ENCODE measurements at regions of chr4 and their contacts with region 1.

Region 1: DNA sequence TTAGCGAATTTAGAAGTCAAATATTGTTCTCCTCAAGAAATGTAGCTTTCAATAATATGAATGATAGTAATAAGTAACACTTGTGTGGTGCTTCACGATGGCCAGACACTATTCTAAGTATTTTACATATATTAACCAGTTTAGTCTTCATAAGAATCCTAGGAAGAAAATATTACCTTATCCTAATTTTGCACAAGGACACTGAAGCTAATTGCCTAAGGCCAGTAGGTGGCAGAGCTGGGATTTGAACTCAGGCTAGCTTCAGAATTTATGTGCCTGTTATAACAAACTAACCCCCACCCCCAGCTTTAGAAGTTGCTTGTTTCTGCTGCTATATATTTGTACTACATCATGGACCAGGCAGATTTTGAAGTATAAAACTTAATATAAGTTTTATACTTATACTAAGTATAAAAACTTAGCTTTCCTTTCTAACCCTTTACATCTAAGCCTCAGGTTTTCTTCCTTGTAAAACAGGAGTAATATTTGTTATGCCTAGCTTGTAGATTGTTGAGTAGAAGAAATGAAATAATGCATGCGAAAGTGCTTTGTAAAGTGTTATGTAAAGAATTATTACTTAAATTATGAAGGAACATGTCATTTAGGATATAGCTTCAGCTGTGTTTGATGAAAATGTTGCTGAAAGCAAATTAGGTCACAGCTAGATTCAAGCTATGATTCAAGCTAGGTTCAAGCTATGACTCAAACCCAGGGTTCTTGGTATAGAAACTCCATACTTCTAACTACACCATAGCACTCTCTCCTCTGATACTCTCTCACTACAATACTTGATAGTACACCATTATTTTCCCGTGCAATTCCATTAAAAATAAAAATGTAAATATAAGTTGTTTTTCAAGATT is 4.2 kb upstream of the CDS1 start:
- DNase-seq: peak; percentile 36 to 56 (median 53)
- H3K4me3 ChIP-seq: no peak overlapping the region
- H3K27ac ChIP-seq: no peak overlapping the region
- H3K4me1 ChIP-seq: peaks cover 0 to 20% (median 15%) of the 10 kb centered on the region in 4 experiments
- H3K27me3 ChIP-seq: peaks cover 19 to 41% (median 25%) of the 10 kb centered on the region in 5 experiments

Region 2: DNA sequence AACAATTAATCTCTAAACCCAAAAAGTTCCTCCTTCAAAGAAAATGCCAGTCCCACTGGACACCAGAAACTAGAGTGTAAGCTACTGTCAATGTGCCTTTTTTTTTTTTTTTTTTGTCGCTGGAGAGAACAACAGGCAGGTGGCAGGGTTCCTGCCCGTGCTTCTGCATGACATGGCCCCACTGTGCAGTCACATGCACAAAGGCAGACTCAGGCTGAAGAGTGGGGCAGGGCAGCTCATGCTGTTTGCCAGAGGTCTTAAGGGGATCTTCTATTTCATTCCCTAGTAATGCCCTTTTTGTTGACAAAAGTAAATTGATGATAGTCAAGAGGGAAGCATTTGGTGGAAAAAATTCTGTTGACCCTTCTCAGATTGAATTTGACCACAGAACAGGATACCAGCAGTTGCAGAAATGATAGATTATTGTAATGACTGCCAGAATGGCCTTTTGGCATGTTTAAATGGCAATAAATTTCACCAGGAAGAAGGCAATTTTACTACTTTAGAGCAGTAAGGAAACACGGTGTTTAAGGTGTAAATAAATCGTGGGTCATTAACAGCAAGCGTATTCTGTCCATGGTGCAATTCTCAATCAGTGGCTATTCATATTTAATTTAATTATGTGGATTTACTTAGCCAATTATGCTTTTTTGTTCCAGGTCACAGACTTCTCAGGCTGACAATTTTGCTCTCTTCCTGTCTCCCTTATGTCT is 160.6 kb before region 1 on chr4:
- CTCF ChIA-PET with region 1: no interaction called
- POLR2A ChIA-PET with region 1: no interaction called
- DNase-seq: no peak
- H3K4me3 ChIP-seq: no peak overlapping the region
- H3K27ac ChIP-seq: no peak overlapping the region
- H3K4me1 ChIP-seq: no peaks in the 10 kb centered on the region
- H3K27me3 ChIP-seq: peaks cover 0 to 2% (median 0%) of the 10 kb centered on the region in 5 experiments

Region 3: GRCh38 chr4:84568496-84568895 is 10.3 kb before region 1 on chr4:
- CTCF ChIA-PET with region 1: interaction called, 11 read pairs
- POLR2A ChIA-PET with region 1: no interaction called
- DNase-seq: no peak
- H3K4me3 ChIP-seq: no peak overlapping the region
- H3K27ac ChIP-seq: no peak overlapping the region
- H3K4me1 ChIP-seq: no peaks in the 10 kb centered on the region
- H3K27me3 ChIP-seq: peaks cover 0 to 2% (median 0%) of the 10 kb centered on the region in 5 experiments

Region 4: GRCh38 chr4:84971319-84971932 is 392.7 kb after region 1 on chr4:
- CTCF ChIA-PET with region 1: interaction called, 11 read pairs
- POLR2A ChIA-PET with region 1: no interaction called
- DNase-seq: peak; percentile 47 to 71 (median 66)
- H3K4me3 ChIP-seq: no peak overlapping the region
- H3K27ac ChIP-seq: no peak overlapping the region
- H3K4me1 ChIP-seq: peaks cover 5 to 10% (median 10%) of the 10 kb centered on the region in 4 experiments
- H3K27me3 ChIP-seq: peaks cover 4 to 24% (median 6%) of the 10 kb centered on the region in 5 experiments